ENCODE measurements at regions of chr17 and their contacts with region 1.

Region 1: DNA sequence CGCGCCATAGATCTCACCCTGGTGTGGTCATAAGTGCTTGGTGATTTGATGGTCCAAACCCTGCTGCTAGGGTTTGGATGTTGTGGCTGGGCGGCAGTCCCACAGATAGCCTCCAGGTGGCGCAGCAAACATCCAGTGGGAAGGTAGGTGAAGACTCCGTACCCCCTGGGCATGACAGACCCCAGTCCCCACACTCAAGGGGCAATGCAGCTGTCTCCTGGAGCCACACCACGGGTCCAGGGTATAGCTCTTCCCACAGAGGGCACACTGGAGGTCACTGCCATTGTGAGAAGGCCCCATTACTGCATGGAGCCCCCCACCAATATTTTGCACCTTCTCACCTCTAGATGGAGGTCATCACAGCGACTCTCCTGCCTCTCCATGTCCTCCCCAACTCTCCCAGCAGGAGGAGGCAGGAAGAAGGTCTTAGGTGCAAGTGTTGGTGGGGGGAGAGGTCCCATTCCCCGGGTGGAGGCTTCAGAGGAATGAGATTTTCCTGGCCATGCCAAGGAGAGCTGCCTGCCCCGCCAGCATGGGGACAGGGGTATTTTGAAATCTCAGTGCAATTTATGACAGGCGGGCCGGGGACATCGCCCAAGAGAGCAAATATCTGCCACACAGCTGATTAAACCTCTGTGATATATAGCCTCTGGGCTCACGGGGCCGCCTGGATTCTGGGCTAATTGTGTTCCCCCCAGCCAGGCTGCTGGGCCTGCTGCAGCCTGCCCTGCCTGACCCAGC is 17.1 kb upstream of the C17orf113 start:
- DNase-seq: peak; percentile 28 to 73 (median 51)
- ATAC-seq: peak in 2 of 4 donors; percentile 40 to 46
- H3K4me3 ChIP-seq: no peak overlapping the region
- H3K27ac ChIP-seq: no peak overlapping the region
- H3K4me1 ChIP-seq: peaks cover 0 to 18% (median 7%) of the 10 kb centered on the region in 12 donors
- H3K27me3 ChIP-seq: peaks cover 0 to 22% (median 13%) of the 10 kb centered on the region in 9 donors
- CTCF ChIP-seq: peak; percentile 75 to 94 (median 87)
- POLR2A ChIP-seq: no peak

Region 2: DNA sequence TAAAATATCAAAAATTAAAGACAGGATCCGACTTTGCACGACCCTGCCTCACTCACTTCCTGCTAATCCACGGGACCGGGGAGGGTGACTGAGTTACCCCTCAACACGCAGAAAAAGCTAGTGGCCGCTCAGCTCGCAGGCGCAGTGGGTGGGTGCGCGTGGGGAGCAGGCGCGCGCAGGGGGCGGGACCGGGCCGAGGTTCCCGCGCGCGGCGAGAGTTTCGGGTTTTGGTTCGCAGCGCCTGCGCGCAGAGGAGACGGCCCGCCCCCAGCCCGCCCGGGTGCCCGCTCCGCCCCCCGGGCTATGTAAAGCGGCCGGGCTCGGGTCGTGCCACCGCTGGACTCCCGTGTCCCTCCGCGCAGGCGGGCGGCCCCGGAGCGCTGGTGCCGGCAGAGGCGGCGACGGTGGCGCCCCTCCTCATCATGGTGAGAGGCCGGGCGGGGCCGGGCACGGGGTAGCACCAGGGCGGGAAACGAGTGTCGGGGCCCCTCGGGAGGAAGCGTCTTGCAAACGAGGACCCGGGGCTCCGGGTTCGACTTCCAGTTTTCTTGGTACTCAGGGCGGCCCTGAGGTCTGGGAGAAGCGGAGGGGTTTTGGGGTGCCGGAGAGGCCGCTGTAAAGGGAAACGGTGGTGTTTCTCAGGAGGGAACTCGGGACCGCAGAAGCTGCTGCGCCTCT is 100.9 kb before region 1 on chr17 and contains the start of gene CNP:
- intact Hi-C with region 1: loop called in 1 of 10 experiments (anchors 10 kb)
- DNase-seq: peak; percentile 93 to 96 (median 94)
- ATAC-seq: peak; percentile 90 to 95 (median 94)
- H3K4me3 ChIP-seq: peak within 1 kb of the TSS; percentile 64 to 100 (median 90)
- H3K27ac ChIP-seq: peak within 1 kb of the TSS; percentile 59 to 94 (median 86)
- H3K4me1 ChIP-seq: peaks cover 0 to 42% (median 24%) of the 10 kb centered on the region in 12 donors
- H3K27me3 ChIP-seq: no peaks in the 10 kb centered on the region
- CTCF ChIP-seq: no peak
- POLR2A ChIP-seq: peak in 1 of 2 donors; percentile 91
- total RNA-seq, gene CNP: 23.3 to 49.1 (median 27.5) TPM

Region 3: DNA sequence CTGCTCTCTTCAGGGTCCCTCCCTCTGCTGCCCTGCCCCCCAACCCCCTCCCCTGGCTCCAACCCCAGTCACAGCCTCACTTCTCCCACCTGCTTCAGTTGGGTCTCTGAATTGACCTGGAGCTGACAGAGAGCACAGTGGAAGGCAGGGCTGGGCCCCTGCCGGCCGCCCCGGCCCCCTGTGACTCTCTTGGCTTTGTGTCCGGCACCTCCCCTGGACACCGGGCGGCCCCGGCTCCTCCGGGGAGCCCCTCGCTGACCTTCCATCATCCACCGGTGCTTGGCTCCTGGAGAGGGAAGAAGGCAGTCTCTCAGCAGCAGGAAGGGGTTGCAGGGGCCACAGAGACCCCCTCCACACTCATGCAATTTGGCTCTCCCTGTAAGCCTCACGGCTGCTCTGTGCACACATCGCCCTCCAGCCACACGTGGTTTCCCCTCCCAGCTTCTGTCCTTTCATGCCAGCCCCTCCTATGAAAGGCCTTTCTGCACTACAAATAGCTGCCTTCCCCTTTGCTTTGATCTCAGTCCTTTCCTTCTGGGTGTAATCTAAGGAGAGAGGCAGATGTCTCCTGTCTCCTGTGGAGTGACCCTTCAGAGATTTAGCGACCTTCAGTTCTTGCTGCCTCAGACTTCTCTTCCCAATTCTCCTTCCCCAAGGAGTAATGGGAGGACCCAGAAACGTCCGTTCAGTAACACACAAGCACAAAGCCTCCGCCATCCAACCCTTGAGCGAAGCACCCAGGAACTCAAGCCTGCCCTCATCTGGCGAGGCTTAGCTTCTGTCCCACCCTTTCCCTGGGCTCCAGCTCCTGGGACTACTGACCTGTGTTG is 39.3 kb before region 1 on chr17:
- intact Hi-C with region 1: loop called in 3 of 10 experiments (anchors 5 kb)
- DNase-seq: no peak
- ATAC-seq: no peak
- H3K4me3 ChIP-seq: no peak overlapping the region
- H3K27ac ChIP-seq: no peak overlapping the region
- H3K4me1 ChIP-seq: peaks cover 0 to 30% (median 14%) of the 10 kb centered on the region in 12 donors
- H3K27me3 ChIP-seq: peaks cover 0 to 9% (median 0%) of the 10 kb centered on the region in 9 donors
- CTCF ChIP-seq: peak in 2 of 12 donors; percentile 10 to 12
- POLR2A ChIP-seq: no peak

Region 4: GRCh38 chr17:42101513-42102319 is 34.2 kb after region 1 on chr17:
- intact Hi-C with region 1: loop called in 5 of 10 experiments (anchors 5 kb)
- DNase-seq: peak; percentile 63 to 87 (median 78)
- ATAC-seq: peak; percentile 85 to 89 (median 88)
- H3K4me3 ChIP-seq: no peak overlapping the region
- H3K27ac ChIP-seq: no peak overlapping the region
- H3K4me1 ChIP-seq: peaks cover 0 to 12% (median 4%) of the 10 kb centered on the region in 12 donors
- H3K27me3 ChIP-seq: peaks cover 9 to 20% (median 16%) of the 10 kb centered on the region in 9 donors
- CTCF ChIP-seq: peak; percentile 74 to 91 (median 84)
- POLR2A ChIP-seq: no peak

Region 5: GRCh38 chr17:42120770-42121769 is 53.5 kb after region 1 on chr17 and contains the start of gene KAT2A:
- intact Hi-C with region 1: loop called in 8 of 10 experiments (anchors 2 to 10 kb)
- DNase-seq: peak; percentile 83 to 91 (median 86)
- ATAC-seq: peak; percentile 73 to 93 (median 92)
- H3K4me3 ChIP-seq: peak within 1 kb of the TSS; percentile 43 to 97 (median 78)
- H3K27ac ChIP-seq: peak within 1 kb of the TSS in 11 of 12 donors; percentile 24 to 80 (median 71)
- H3K4me1 ChIP-seq: peaks cover 0 to 29% (median 16%) of the 10 kb centered on the region in 12 donors
- H3K27me3 ChIP-seq: no peaks in the 10 kb centered on the region
- CTCF ChIP-seq: no peak
- POLR2A ChIP-seq: peak in 1 of 2 donors; percentile 51
- total RNA-seq, gene KAT2A: 6.9 to 17.6 (median 14.8) TPM

Region 6: DNA sequence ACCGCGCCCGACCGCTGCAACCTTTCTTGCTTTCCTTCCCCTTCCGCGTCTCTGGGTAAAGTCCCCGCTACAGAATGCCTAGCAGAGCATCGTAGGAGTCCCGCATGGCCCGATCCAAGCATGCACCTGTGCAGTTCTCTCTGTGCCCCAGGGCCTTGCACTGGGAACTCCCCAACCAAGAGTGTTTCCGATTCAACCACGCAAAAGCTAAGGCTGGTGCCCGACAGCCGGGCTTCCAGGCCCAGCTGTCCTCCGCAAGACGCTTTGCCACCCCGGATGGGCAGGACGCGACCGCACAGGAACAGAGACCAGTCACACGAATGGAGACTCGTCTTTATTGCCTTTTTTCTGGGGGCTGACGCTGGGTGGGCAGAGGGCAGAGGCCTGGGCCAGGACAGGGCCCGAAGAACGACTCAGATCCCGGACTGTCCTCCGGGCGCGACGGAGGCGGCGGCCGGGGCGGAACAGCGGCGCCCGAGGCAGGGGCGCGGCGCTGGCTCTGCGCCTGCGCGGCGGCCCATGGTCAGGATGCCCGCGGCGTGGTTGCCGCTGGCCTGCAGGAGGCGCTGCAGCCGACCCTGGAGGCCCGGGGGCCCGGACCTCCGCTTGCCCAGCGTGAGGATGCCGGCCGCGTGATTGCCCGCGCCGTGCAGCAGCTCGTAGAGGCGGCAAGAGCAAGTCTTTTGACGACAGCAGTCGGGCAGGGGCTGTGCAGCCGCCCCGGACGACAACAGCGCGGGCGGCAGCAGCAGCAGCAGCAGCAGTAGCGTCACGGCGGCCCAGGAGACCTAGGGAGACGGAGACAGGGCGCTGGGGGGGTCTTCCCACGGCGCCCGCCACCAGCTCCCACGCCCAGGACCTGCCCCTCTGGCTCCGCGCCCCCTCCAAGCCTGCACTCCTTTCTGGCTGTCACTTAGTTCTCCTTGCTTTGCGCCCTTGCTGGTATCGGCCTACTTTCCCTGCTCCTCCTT is 116.5 kb after region 1 on chr17:
- intact Hi-C with region 1: loop called in 1 of 10 experiments (anchors 10 kb)
- DNase-seq: peak; percentile 67 to 92 (median 80)
- ATAC-seq: peak; percentile 41 to 89 (median 82)
- H3K4me3 ChIP-seq: peak overlapping the region; percentile 27 to 72 (median 61)
- H3K27ac ChIP-seq: peak overlapping the region in 11 of 12 donors; percentile 67 to 88 (median 80)
- H3K4me1 ChIP-seq: peaks cover 0 to 53% (median 27%) of the 10 kb centered on the region in 12 donors
- H3K27me3 ChIP-seq: peaks cover 0 to 28% (median 14%) of the 10 kb centered on the region in 9 donors
- CTCF ChIP-seq: peak; percentile 66 to 98 (median 88)
- POLR2A ChIP-seq: peak in 1 of 2 donors; percentile 65